Mammary epithelial cell (primary cell): ENCODE measurements at regions of chr12 and their contacts with region 1.

Region 1: GRCh38 chr12:32444895-32445294 is 45.5 kb downstream of the FGD4 start:
- DNase-seq: peak; percentile 90
- H3K4me3 ChIP-seq: no peak overlapping the region
- H3K27ac ChIP-seq: peak overlapping the region; percentile 45
- H3K4me1 ChIP-seq: peaks cover 67% of the 10 kb centered on the region
- H3K27me3 ChIP-seq: no peaks in the 10 kb centered on the region
- CTCF ChIP-seq: no peak

Region 2: GRCh38 chr12:32644431-32644830 is 199.5 kb after region 1 on chr12:
- CTCF ChIA-PET with region 1: interaction called, 15 read pairs
- dilution Hi-C with region 1: no loop called
- in situ Hi-C with region 1: no loop called
- intact Hi-C with region 1: no loop called
- DNase-seq: no peak
- H3K4me3 ChIP-seq: no peak overlapping the region
- H3K27ac ChIP-seq: no peak overlapping the region
- H3K4me1 ChIP-seq: no peaks in the 10 kb centered on the region
- H3K27me3 ChIP-seq: no peaks in the 10 kb centered on the region
- CTCF ChIP-seq: no peak

Region 3: GRCh38 chr12:32843528-32844095 is 398.7 kb after region 1 on chr12:
- CTCF ChIA-PET with region 1: no interaction called
- dilution Hi-C with region 1: no loop called
- in situ Hi-C with region 1: no loop called
- intact Hi-C with region 1: no loop called
- DNase-seq: peak; percentile 42
- H3K4me3 ChIP-seq: no peak overlapping the region
- H3K27ac ChIP-seq: no peak overlapping the region
- H3K4me1 ChIP-seq: no peaks in the 10 kb centered on the region
- H3K27me3 ChIP-seq: no peaks in the 10 kb centered on the region
- CTCF ChIP-seq: no peak